ENCODE measurements at regions of chr5 and their contacts with region 1.

Region 1: GRCh38 chr5:144203750-144204596 is 33.3 kb downstream of the KCTD16 start:
- H3K4me3 ChIP-seq: no peak overlapping the region
- H3K27ac ChIP-seq: no peak overlapping the region
- H3K4me1 ChIP-seq: peaks cover 3% of the 10 kb centered on the region
- CTCF ChIP-seq: peak; percentile 56

Region 2: GRCh38 chr5:144191998-144192397 is 12.0 kb before region 1 on chr5:
- CTCF ChIA-PET with region 1: interaction called, 29 read pairs
- POLR2A ChIA-PET with region 1: no interaction called
- H3K4me3 ChIP-seq: no peak overlapping the region
- H3K27ac ChIP-seq: no peak overlapping the region
- H3K4me1 ChIP-seq: peaks cover 32% of the 10 kb centered on the region
- CTCF ChIP-seq: 0 out of 2 replicates have a peak, but pooled peaks have one; percentile 20

Region 3: DNA sequence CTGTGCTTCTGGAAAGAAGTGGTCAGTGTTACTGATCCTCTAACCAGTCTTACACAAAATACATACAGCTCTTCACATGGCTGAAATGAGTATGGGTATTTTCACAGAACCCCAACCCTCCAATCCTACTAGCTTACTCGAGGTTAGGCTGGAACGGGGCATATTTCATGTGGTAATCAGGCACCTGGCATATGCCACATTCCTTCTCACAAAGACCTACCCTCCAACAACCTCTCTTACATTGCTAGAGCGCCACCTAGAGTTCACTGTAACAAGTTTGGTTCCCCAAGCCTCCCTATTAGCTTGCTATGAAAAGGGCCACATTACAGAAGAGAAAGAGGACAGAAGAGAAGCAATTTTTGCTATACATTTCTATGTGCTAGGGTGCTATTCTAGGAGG is 1033.9 kb after region 1 on chr5:
- CTCF ChIA-PET with region 1: interaction called, 36 read pairs
- POLR2A ChIA-PET with region 1: no interaction called
- H3K4me3 ChIP-seq: no peak overlapping the region
- H3K27ac ChIP-seq: no peak overlapping the region
- H3K4me1 ChIP-seq: no peaks in the 10 kb centered on the region
- CTCF ChIP-seq: no peak

Measured in HEK293 (cell line).